Activated CD8-positive, alpha-beta T cell treated with anti-CD3 and anti-CD28 coated beads for 36 hours (primary cell): ENCODE measurements at regions of chr4 and their contacts with region 1.

Region 1: DNA sequence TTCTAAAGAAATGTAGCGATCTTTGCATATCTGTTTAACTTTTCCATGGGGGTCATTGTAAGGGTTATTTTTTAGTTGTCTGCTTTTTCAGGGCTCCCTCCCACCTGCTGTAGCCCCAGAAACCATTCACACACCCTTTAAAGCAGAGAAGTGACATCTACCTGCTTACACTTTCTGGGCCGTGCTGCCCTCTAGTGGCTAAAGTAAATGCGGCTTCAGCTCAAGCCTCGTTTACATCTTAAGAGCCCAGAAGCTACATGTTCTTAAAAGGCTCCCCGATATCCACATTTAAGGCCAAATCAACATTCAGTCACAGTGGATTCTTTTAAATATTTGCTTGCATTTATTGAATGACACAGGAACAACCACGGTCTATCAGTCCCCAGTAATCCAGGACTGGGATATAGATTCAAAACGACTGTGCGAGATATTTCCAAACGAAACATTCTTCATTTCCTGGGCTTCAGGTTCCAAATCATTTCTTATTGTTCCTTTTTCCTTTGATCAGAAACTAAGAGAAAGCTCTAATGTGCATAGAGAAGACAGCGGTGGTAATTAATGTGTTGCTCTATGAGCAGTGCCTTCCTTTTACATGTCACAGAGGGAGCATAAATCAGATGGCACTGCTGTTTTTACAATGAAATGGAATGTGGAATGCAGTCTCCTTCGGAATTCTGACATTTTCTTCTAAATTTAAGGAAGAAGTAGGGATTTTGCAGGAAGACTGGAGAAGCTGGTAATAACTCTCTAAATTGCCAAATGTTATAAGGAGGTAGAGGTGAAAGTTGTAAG is 119.9 kb downstream of the RASGEF1B start:
- DNase-seq: peak; percentile 83
- ATAC-seq: no peak
- H3K4me3 Mint-ChIP-seq: no peak overlapping the region
- H3K27ac Mint-ChIP-seq: no peak overlapping the region
- H3K4me1 Mint-ChIP-seq: no peaks in the 10 kb centered on the region
- H3K27me3 Mint-ChIP-seq: peaks cover 8% of the 10 kb centered on the region
- CTCF ChIP-seq: peak; percentile 90

Region 2: DNA sequence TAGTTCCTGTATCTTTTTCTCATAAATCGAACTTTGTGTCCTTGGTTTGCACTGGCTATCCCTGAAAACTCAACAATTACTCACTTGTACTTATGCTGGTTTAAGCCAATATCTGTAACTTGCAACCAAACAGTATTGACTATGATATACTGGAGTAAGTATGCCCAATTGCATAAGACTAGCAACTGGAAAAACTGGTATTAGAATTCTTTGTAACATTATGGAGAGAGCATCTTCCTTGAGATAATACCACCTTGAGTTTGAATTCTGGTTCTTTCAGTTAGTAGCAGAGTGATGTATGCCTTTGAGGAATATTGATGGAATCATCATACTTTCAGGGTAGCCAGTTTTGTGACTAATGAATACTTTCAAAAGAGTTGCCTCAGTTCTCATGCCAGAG is 293.2 kb before region 1 on chr4:
- CTCF ChIA-PET with region 1: interaction called, 10 read pairs
- POLR2A ChIA-PET with region 1: no interaction called
- intact Hi-C with region 1: no loop called
- DNase-seq: no peak
- ATAC-seq: no peak
- H3K4me3 Mint-ChIP-seq: no peak overlapping the region
- H3K27ac Mint-ChIP-seq: no peak overlapping the region
- H3K4me1 Mint-ChIP-seq: no peaks in the 10 kb centered on the region
- H3K27me3 Mint-ChIP-seq: peaks cover 15% of the 10 kb centered on the region
- CTCF ChIP-seq: no peak

Region 3: DNA sequence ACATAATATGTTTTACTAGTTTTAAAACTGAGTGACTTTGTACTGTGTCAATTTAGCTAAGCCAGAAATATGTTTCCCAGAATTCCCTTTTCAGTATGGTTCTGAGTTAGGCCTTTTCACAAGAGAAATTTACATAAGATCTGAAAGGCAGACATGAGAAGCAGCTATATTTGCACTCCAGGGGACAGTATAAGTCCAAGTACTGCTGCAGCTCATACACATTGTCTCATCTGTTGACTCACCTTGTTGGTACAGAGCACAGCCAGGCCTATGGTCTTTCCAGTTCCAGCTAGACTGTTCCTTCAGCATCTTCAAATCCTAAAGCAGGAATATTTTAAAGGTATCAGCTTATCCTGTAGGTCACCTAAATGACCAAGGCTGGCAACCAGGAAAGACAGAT is 267.8 kb before region 1 on chr4:
- CTCF ChIA-PET with region 1: interaction called, 11 read pairs
- POLR2A ChIA-PET with region 1: no interaction called
- intact Hi-C with region 1: no loop called
- DNase-seq: no peak
- ATAC-seq: no peak
- H3K4me3 Mint-ChIP-seq: no peak overlapping the region
- H3K27ac Mint-ChIP-seq: no peak overlapping the region
- H3K4me1 Mint-ChIP-seq: no peaks in the 10 kb centered on the region
- H3K27me3 Mint-ChIP-seq: no peaks in the 10 kb centered on the region
- CTCF ChIP-seq: no peak

Region 4: DNA sequence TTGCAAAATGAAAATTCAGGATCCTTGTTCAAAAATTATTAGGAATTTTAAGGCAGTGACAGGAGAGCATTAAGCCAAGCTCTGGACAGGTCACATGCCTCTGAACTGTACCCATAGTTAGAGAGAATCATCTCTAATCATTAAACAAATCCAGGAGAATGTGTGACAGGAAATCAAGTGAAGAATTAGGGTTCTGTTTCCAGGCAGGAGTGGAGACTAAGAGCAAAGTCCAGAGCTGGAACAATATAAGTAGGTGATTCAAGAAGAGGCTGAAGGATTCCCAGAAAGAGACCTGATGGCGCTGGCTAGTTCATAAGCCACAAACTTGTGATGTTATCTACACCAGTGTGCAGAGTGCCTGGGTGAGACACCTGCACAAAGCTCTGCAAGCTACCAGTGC is 32.2 kb before region 1 on chr4:
- CTCF ChIA-PET with region 1: interaction called, 13 read pairs
- POLR2A ChIA-PET with region 1: no interaction called
- intact Hi-C with region 1: no loop called
- DNase-seq: no peak
- ATAC-seq: no peak
- H3K4me3 Mint-ChIP-seq: no peak overlapping the region
- H3K27ac Mint-ChIP-seq: no peak overlapping the region
- H3K4me1 Mint-ChIP-seq: no peaks in the 10 kb centered on the region
- H3K27me3 Mint-ChIP-seq: peaks cover 17% of the 10 kb centered on the region
- CTCF ChIP-seq: no peak